ENCODE measurements at regions of chr5 and their contacts with region 1.

Region 1: DNA sequence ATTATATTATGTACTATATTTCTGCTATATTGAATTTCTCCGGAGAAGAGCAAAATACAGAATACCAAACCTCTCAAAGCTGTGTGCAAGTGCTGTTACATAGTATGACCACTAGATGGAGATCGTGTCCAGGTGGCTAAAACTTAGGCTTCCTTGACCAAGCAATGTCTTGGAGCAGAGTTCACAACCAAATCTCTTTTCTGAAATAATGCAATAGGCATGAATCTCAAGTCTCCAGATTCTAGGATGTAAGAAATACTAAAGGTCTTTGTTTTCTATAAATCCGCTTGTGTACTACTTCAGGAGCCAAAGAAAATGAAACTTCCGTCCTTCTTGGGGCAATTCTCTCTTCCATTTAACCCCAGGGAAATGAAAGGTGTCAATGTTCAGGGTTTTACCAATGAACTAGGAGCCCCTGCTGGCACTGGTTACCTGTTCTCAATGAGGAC is 181.5 kb upstream of the RAI14 start:
- DNase-seq: no peak
- H3K4me3 ChIP-seq: no peak overlapping the region
- H3K27me3 ChIP-seq: peaks cover 2% of the 10 kb centered on the region; the same call in 1 of the 2 replicates
- CTCF ChIP-seq: peak; percentile 94

Region 2: GRCh38 chr5:33840927-33841547 is 633.6 kb before region 1 on chr5:
- CTCF ChIA-PET with region 1: no interaction called
- POLR2A ChIA-PET with region 1: no interaction called
- DNase-seq: no peak
- H3K4me3 ChIP-seq: no peak overlapping the region
- H3K27me3 ChIP-seq: no peaks in the 10 kb centered on the region
- CTCF ChIP-seq: no peak

Region 3: GRCh38 chr5:34608859-34609648 is 134.5 kb after region 1 on chr5:
- CTCF ChIA-PET with region 1: no interaction called
- POLR2A ChIA-PET with region 1: no interaction called
- DNase-seq: peak; percentile 92
- H3K4me3 ChIP-seq: no peak overlapping the region
- H3K27me3 ChIP-seq: no peaks in the 10 kb centered on the region
- CTCF ChIP-seq: no peak

Region 4: DNA sequence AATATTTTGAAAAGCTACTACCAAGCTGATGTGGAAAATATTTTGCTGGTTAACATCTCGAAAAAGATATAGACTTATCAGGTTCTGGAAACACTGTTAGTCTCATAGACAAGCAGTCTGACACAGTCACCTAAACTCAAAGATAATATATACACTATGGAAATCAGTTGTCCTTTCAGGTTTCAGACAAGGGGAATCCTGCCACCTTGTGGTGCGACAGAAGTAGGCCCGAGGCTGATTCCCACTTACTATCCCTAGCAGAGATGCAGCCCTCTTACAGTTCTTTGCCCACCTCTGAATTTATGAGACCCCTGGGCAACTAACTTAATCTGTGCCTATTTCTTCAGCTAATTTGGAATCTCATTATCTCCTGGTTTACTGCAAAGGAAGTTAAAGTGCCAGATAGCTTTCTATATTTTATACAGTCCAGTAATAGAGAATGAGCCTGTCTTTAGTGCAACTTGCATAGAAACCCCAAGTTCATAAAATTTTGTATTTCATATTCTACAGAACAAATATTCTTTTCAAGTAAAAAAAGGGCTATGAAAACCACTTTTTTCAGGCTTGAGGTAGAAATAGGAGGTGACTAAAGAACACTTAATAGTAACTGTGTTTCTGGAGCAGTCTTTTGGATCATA is 423.8 kb after region 1 on chr5:
- CTCF ChIA-PET with region 1: interaction called, 42 read pairs
- POLR2A ChIA-PET with region 1: no interaction called
- DNase-seq: peak; percentile 7
- H3K4me3 ChIP-seq: no peak overlapping the region
- H3K27me3 ChIP-seq: no peaks in the 10 kb centered on the region
- CTCF ChIP-seq: peak; percentile 87

Region 5: DNA sequence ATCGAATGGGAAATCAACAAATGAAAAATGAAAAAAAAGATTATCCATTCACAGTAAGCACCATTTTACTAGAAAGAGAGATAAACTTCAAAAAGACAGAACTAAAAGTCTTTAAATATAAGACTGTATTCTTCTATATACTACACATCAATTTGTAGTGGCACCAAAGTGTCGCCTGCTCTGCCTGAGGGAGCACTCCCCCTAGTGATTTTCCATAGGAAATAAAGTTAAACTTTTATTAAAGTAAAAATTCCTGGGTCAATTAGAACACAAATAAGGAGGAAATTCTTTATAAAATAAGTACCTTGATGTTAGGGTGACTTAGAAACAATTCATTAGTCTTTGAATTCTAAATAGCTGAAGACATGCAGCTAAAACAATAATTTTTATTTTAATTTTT is 431.0 kb after region 1 on chr5:
- CTCF ChIA-PET with region 1: interaction called, 26 read pairs
- POLR2A ChIA-PET with region 1: no interaction called
- DNase-seq: no peak
- H3K4me3 ChIP-seq: no peak overlapping the region
- H3K27me3 ChIP-seq: no peaks in the 10 kb centered on the region
- CTCF ChIP-seq: peak; percentile 54

Measured in BJ (cell line).